Activated CD4-positive, alpha-beta T cell treated with anti-CD3 and anti-CD28 coated beads, Interleukin-2, amount 10 ng/mL, durations not matched to agents 24 days and 14 days (primary cell): ENCODE measurements at regions of chr14 and their contacts with region 1.

Region 1: DNA sequence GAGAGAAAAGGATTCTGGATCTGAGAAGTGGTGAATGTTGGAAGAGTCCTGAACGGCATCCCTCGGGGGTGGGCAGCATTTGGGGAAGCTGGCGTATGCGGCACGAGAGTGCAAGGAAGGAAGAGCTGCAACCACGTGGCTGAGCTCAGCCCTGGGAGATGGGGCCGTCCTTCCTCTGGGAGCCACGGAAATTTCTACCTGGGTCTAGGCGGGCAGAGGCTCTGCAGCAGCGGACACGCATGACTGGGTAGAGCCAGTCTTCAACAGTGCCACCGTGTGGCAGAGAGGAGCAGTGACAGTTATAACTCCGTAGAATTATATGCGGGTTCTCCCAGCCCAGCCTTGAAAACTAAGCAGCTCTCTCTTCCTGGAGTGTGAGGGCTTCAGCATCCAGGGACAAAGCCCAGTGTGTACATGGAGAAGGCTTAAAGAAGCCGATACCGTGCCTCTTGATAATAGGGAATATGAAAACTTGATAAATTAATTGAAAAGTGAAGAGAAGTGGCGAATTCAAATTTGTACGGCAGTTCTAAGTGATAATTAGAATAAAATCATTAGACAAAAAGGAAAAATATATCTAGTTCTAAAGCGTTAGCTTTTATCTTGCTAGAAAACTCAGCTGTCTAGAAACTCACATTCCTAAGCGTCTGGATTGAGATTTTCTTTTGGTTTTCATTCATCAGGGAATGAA is 82.9 kb upstream of the STXBP6 start:
- DNase-seq: peak; percentile 84
- H3K4me3 Mint-ChIP-seq: no peak overlapping the region
- H3K27ac Mint-ChIP-seq: no peak overlapping the region
- H3K4me1 Mint-ChIP-seq: peaks cover 6% of the 10 kb centered on the region
- H3K27me3 Mint-ChIP-seq: peaks cover 17% of the 10 kb centered on the region

Region 2: GRCh38 chr14:24710403-24711112 is 422.3 kb before region 1 on chr14:
- intact Hi-C with region 1: loop called (anchors 1 kb)
- DNase-seq: peak; percentile 88
- H3K4me3 Mint-ChIP-seq: no peak overlapping the region
- H3K27ac Mint-ChIP-seq: no peak overlapping the region
- H3K4me1 Mint-ChIP-seq: peaks cover 2% of the 10 kb centered on the region
- H3K27me3 Mint-ChIP-seq: peaks cover 10% of the 10 kb centered on the region

Region 3: GRCh38 chr14:24806061-24806678 is 326.7 kb before region 1 on chr14:
- intact Hi-C with region 1: loop called (anchors 2 kb)
- DNase-seq: peak; percentile 78
- H3K4me3 Mint-ChIP-seq: no peak overlapping the region
- H3K27ac Mint-ChIP-seq: no peak overlapping the region
- H3K4me1 Mint-ChIP-seq: no peaks in the 10 kb centered on the region
- H3K27me3 Mint-ChIP-seq: peaks cover 8% of the 10 kb centered on the region